IMR-90 (cell line): ENCODE measurements at regions of chr12 and their contacts with region 1.

Region 1: DNA sequence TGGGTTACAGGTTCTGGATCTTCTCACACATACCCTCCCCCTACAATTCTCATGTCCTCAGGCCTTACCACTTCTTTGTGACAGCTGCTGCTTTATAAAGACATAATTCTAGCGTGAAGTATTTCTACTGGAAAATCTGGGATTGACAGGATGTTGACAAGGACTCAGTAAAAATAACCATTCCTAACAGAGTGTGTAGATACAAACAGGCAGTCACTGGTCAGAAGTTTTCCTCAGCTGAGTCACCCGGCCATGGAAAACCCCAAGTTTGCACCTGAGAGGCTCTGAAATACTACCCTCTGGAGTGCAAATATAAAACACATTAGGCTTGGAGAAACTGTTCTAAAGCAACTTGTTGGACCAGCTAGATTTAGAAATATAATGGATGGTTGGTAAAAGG is 54.4 kb downstream of the SPPL3 start:
- DNase-seq: peak; percentile 83
- ATAC-seq: peak; percentile 67
- H3K4me3 ChIP-seq: no peak overlapping the region
- H3K27ac ChIP-seq: no peak overlapping the region
- H3K4me1 ChIP-seq: peaks cover 19% of the 10 kb centered on the region
- H3K27me3 ChIP-seq: no peaks in the 10 kb centered on the region
- CTCF ChIP-seq: no peak
- POLR2A ChIP-seq: no peak
- RAD21 ChIP-seq: no peak

Region 2: DNA sequence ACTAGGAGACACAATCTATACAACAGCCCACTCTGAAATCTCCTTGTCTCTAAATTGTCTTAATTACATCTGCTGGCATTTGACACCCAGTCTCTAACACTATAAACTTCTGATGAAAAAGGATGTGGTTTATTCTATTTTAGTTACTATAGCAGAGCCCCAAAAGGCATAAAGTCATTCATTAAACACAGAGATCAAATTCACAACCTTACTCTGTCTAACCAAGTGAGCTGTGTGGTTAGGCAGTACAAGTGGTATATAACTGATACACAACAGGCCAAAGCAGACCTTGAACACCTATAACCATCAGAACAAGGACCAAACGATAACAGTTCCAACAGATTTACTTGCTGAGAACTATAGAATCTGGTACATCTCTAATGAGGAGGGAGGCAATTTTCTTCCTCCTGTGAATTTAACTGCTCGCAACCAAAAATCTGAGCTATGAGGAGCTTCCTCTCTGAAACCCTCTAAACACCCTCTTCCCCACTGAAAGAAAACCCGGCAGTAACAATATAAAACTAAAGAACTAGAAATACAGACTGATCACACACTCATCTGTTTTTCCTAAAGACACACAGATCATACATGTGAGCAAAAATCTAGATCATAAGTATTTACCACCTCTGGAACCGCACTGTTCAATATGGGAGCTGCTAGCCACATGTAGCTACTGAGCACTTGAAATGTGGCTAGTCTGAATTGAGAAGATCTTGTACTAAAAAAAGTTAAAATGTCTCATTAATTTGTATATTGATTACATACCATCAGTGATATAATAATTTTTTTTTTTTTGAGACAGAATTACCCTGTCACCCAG is 36.6 kb after region 1 on chr12:
- CTCF ChIA-PET with region 1: no interaction called
- POLR2A ChIA-PET with region 1: no interaction called
- dilution Hi-C with region 1: no loop called
- in situ Hi-C with region 1: no loop called
- intact Hi-C with region 1: loop called (anchors 5 kb)
- DNase-seq: no peak
- ATAC-seq: no peak
- H3K4me3 ChIP-seq: no peak overlapping the region
- H3K27ac ChIP-seq: no peak overlapping the region
- H3K4me1 ChIP-seq: no peaks in the 10 kb centered on the region; the same call in 1 of the 2 replicates
- H3K27me3 ChIP-seq: no peaks in the 10 kb centered on the region
- CTCF ChIP-seq: no peak
- POLR2A ChIP-seq: no peak
- RAD21 ChIP-seq: no peak